RWPE1 (cell line): ENCODE measurements at regions of chr17 and their contacts with region 1.

Region 1: DNA sequence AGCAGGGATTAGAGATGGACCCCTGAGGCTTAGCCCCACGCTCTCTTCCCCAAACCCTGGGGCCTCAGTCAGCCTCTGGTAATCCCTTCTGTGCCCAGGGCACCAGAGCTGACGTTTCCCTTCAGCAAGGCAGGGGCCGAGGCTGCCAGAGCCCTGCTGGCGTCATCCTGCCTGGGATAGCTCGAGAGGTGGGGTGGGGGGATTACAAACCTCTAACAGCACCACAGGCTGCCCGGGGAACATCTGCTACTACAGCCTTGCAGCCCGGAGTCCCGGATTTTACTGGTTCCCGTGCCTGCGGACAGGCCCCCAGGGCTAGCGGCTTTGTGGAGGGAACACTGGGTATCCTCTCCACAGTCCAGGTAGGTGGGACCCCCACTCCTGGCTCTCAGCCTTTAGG is at the start of gene AANAT:
- DNase-seq: no peak
- H3K27ac ChIP-seq: no peak within 1 kb of the TSS
- CTCF ChIP-seq: no peak

Region 2: GRCh38 chr17:76191896-76192295 is 275.5 kb before region 1 on chr17:
- CTCF ChIA-PET with region 1: no interaction called
- POLR2A ChIA-PET with region 1: no interaction called
- DNase-seq: no peak
- H3K27ac ChIP-seq: no peak overlapping the region
- CTCF ChIP-seq: no peak

Region 3: GRCh38 chr17:76414334-76415295 is 52.8 kb before region 1 on chr17:
- CTCF ChIA-PET with region 1: no interaction called
- POLR2A ChIA-PET with region 1: no interaction called
- DNase-seq: no peak
- H3K27ac ChIP-seq: peak overlapping the region; percentile 27; the same call in 1 of the 2 replicates
- CTCF ChIP-seq: no peak

Region 4: GRCh38 chr17:76492989-76493501 is 25.7 kb after region 1 on chr17:
- CTCF ChIA-PET with region 1: interaction called, 11 read pairs
- POLR2A ChIA-PET with region 1: no interaction called
- DNase-seq: peak; percentile 52
- H3K27ac ChIP-seq: peak overlapping the region; percentile 89
- CTCF ChIP-seq: no peak

Region 5: GRCh38 chr17:76506408-76507349 is 39.3 kb after region 1 on chr17:
- CTCF ChIA-PET with region 1: interaction called, 28 read pairs
- POLR2A ChIA-PET with region 1: interaction called, 3 read pairs
- DNase-seq: peak; percentile 81
- H3K27ac ChIP-seq: no peak overlapping the region
- CTCF ChIP-seq: peak; percentile 91

Region 6: GRCh38 chr17:76557368-76558197 is 90.2 kb after region 1 on chr17:
- CTCF ChIA-PET with region 1: no interaction called
- POLR2A ChIA-PET with region 1: no interaction called
- DNase-seq: peak; percentile 83
- H3K27ac ChIP-seq: peak overlapping the region; percentile 94
- CTCF ChIP-seq: peak; percentile 55